ENCODE measurements at regions of chr4 and their contacts with region 1.

Region 1: DNA sequence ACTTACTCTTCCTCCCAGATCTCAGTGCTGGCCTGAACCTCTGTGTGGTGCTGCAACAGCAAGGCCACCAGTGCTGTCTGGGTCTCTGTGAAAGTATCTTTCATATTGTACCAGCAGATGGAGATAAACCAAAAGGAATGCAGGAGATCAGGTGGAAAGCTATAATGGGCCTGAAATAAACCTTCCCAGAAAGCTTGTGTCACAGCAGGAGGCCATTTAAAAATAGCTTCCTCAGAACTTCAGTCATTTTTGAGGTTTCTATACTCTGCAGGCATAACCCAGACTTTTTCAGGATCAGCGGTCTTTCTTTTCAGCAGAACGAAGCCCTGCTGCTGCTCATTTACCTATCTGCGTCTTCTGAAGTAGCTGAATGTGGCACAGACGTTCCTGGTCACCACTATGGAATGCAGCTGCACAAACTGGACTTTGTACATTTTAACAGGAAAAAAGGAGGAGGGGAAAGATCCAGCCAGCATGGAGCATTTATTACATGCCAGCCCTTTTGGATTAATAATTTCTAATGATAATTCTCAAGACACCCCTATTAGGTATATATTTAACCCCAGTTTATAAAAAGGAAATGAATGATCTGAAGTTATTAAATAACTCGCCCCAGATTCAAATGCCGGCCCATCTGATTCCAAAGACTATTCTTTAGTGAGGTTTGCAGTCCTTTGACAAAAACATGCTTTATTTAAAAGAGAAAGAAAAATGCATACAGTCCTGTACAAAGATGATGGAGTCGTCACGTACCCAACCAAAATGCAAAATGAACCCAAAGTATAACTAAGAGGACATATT is 119.7 kb downstream of the NFKB1 start:
- DNase-seq: peak; percentile 92
- ATAC-seq: peak; percentile 93
- H3K4me3 ChIP-seq: peak overlapping the region; percentile 42 to 60 (median 49); a peak in 4 of 6 replicates
- H3K27ac ChIP-seq: peak overlapping the region; percentile 88
- H3K4me1 ChIP-seq: peaks cover 59% of the 10 kb centered on the region
- H3K27me3 ChIP-seq: no peaks in the 10 kb centered on the region
- CTCF ChIP-seq: peak; percentile 87
- EP300 ChIP-seq: peak in 1 of 2 experiments; percentile 54; a peak in 1 of 4 replicates
- POLR2A ChIP-seq: peak; percentile 42 to 79; a peak in 3 of 4 replicates
- RAD21 ChIP-seq: peak; percentile 76

Region 2: DNA sequence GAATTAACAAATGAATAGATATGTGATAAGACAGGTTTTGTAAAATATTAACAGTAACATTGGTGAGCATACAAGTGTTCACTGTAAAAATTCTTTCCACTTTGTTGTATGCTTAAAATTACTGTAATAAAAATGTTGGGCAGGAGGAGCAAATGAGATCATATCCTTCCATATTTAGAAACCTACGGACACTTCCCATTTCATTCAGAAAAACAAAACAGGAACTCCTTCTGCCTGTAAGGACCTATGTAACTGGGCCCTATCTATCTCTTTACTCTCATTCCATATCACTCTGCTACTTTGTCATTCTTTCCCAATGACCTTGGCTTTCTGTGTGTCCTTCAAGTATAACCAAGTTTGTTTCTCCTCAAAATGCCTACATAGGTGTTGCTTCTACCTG is 221.9 kb before region 1 on chr4:
- CTCF ChIA-PET with region 1: no interaction called
- POLR2A ChIA-PET with region 1: no interaction called
- in situ Hi-C with region 1: no loop called
- intact Hi-C with region 1: no loop called
- DNase-seq: no peak
- ATAC-seq: no peak
- H3K4me3 ChIP-seq: no peak overlapping the region
- H3K27ac ChIP-seq: no peak overlapping the region
- H3K4me1 ChIP-seq: no peaks in the 10 kb centered on the region
- H3K27me3 ChIP-seq: no peaks in the 10 kb centered on the region
- CTCF ChIP-seq: no peak
- EP300 ChIP-seq: no peak
- POLR2A ChIP-seq: no peak
- RAD21 ChIP-seq: no peak

Region 3: GRCh38 chr4:102500696-102501446 is 120.0 kb before region 1 on chr4 and contains the start of gene NFKB1:
- CTCF ChIA-PET with region 1: no interaction called
- POLR2A ChIA-PET with region 1: interaction called, 4 read pairs
- in situ Hi-C with region 1: no loop called
- intact Hi-C with region 1: loop called (anchors 5 kb)
- DNase-seq: peak; percentile 54
- ATAC-seq: peak; percentile 61
- H3K4me3 ChIP-seq: peak within 1 kb of the TSS; percentile 85 to 94 (median 92)
- H3K27ac ChIP-seq: peak within 1 kb of the TSS; percentile 97
- H3K4me1 ChIP-seq: peaks cover 43% of the 10 kb centered on the region
- H3K27me3 ChIP-seq: no peaks in the 10 kb centered on the region
- CTCF ChIP-seq: no peak
- EP300 ChIP-seq: no peak
- POLR2A ChIP-seq: peak in 1 of 2 experiments; percentile 11; a peak in 2 of 4 replicates
- RAD21 ChIP-seq: no peak
- total RNA-seq, gene NFKB1: 31.6 and 37.6 TPM in 2 replicates

Region 4: DNA sequence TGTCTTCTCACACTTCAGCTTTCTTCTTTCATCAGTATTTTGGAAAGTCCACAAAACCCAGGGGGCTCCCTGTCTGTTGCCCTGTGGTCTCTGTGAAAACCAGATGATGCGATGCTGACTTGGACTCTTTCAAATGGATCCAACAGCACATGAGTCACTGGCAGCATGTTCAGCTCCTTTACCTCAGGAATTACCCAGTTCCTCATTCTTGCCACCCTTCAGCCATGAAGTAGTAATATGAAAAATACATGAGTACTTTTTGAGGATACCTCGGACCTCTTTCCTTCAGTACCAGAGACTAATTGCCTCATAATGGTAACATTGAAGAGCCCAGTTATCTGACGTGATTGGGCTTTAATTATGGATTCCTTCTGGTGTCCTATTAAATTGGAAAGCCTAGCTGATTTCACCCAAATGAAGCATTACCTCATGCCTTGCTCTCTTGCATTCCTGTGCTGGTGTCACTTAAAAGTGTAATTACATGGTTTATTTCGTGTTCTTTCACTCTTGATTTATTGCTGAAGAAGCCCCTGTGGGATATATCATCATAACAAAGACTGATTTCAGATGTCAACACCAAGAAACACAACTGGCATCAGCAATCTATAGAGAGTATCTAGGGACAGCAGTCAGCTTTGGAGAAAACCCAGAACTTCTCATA is 56.4 kb before region 1 on chr4:
- CTCF ChIA-PET with region 1: no interaction called
- POLR2A ChIA-PET with region 1: no interaction called
- in situ Hi-C with region 1: no loop called
- intact Hi-C with region 1: no loop called
- DNase-seq: no peak
- ATAC-seq: no peak
- H3K4me3 ChIP-seq: no peak overlapping the region
- H3K27ac ChIP-seq: no peak overlapping the region
- H3K4me1 ChIP-seq: peaks cover 8% of the 10 kb centered on the region; the same call in 1 of the 2 replicates
- H3K27me3 ChIP-seq: no peaks in the 10 kb centered on the region
- CTCF ChIP-seq: no peak
- EP300 ChIP-seq: no peak
- POLR2A ChIP-seq: no peak
- RAD21 ChIP-seq: no peak

Region 5: GRCh38 chr4:102792361-102792936 is 171.6 kb after region 1 on chr4:
- CTCF ChIA-PET with region 1: no interaction called
- POLR2A ChIA-PET with region 1: no interaction called
- in situ Hi-C with region 1: no loop called
- intact Hi-C with region 1: loop called (anchors 5 kb)
- DNase-seq: no peak
- ATAC-seq: peak; percentile 24
- H3K4me3 ChIP-seq: no peak overlapping the region
- H3K27ac ChIP-seq: no peak overlapping the region
- H3K4me1 ChIP-seq: no peaks in the 10 kb centered on the region
- H3K27me3 ChIP-seq: no peaks in the 10 kb centered on the region
- CTCF ChIP-seq: no peak
- EP300 ChIP-seq: no peak
- POLR2A ChIP-seq: no peak
- RAD21 ChIP-seq: no peak

Region 6: GRCh38 chr4:103008875-103009729 is 388.2 kb after region 1 on chr4:
- CTCF ChIA-PET with region 1: interaction called, 16 read pairs
- POLR2A ChIA-PET with region 1: no interaction called
- in situ Hi-C with region 1: loop called (anchors 5 kb)
- intact Hi-C with region 1: loop called (anchors 1 kb)
- DNase-seq: peak; percentile 72
- ATAC-seq: peak; percentile 94
- H3K4me3 ChIP-seq: no peak overlapping the region
- H3K27ac ChIP-seq: no peak overlapping the region
- H3K4me1 ChIP-seq: peaks cover 13% of the 10 kb centered on the region; the same call in 1 of the 2 replicates
- H3K27me3 ChIP-seq: no peaks in the 10 kb centered on the region
- CTCF ChIP-seq: peak; percentile 90
- EP300 ChIP-seq: no peak
- POLR2A ChIP-seq: no peak
- RAD21 ChIP-seq: peak; percentile 68

Region 7: GRCh38 chr4:103099691-103100392 is 478.9 kb after region 1 on chr4 and contains the start of gene BDH2:
- CTCF ChIA-PET with region 1: no interaction called
- POLR2A ChIA-PET with region 1: interaction called, 4 read pairs
- in situ Hi-C with region 1: loop called (anchors 5 kb)
- intact Hi-C with region 1: loop called (anchors 2 kb)
- DNase-seq: peak; percentile 85
- ATAC-seq: peak; percentile 87
- H3K4me3 ChIP-seq: peak within 1 kb of the TSS; percentile 52 to 70 (median 66)
- H3K27ac ChIP-seq: no peak within 1 kb of the TSS
- H3K4me1 ChIP-seq: peaks cover 47% of the 10 kb centered on the region
- H3K27me3 ChIP-seq: no peaks in the 10 kb centered on the region
- CTCF ChIP-seq: peak; percentile 90
- EP300 ChIP-seq: 0 out of 4 replicates have a peak, but pooled peaks of 1 of the 2 experiments have one; percentile 5
- POLR2A ChIP-seq: no peak
- RAD21 ChIP-seq: peak; percentile 72
- total RNA-seq, gene BDH2: 46.2 and 61.0 TPM in 2 replicates